AG04449 (cell line): ENCODE measurements at regions of chr5 and their contacts with region 1.

Region 1: GRCh38 chr5:147453875-147454814 is 55.7 kb downstream of the DPYSL3 start:
- DNase-seq: no peak
- H3K4me3 ChIP-seq: peak overlapping the region; percentile 81
- CTCF ChIP-seq: peak; percentile 86

Region 2: GRCh38 chr5:147303976-147304375 is 150.2 kb before region 1 on chr5:
- CTCF ChIA-PET with region 1: no interaction called
- POLR2A ChIA-PET with region 1: no interaction called
- DNase-seq: peak; percentile 26
- H3K4me3 ChIP-seq: no peak overlapping the region
- CTCF ChIP-seq: no peak

Region 3: DNA sequence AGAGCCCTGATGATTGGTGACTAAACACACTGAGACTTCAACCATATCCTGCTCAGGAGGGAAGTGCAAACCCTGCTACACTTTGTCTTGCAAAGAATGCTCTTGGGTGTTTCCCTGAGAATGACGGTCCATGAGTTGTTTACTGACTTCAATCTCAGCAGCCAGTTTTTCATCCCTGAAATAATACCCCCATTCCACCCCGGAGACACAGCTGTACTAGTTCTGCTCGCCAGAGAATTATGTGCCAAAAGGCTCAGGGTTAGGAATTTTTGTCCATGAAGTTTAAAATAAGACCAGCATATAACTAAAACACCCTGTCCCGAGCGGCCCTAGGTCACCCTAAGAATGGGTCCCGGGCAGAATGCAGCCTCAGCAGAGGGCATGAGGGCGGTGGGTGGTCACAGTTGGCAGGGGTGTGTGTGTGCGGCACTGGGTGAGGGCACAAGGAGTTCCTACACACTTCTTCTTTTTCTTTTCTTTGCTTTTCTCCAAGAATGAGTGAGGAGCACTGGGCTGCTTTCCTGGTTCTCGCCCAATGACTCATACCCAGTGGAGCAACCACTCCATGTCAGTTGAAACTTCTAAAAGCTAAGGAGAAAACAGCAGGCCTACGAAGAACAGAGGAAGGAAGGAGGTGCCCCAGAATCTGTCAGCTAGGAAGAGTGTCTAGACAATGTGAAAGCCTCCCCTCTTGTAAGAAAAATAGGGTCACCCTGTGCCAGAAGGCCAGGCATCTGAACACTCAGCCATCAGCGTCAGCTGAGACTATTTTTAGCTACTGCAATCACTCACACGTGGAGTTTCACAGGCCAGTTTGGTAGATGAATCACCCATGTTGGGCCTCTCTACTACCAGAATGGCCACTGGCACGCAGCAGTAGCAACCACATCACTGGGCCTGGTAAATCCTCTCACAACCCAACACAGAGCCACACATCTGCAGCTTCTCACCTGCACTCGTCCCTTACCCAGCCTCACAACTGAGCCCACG is 50.2 kb before region 1 on chr5:
- CTCF ChIA-PET with region 1: interaction called, 10 read pairs
- POLR2A ChIA-PET with region 1: no interaction called
- DNase-seq: peak; percentile 97
- H3K4me3 ChIP-seq: no peak overlapping the region
- CTCF ChIP-seq: no peak

Region 4: GRCh38 chr5:147439254-147439653 is 14.9 kb before region 1 on chr5:
- CTCF ChIA-PET with region 1: interaction called, 18 read pairs
- POLR2A ChIA-PET with region 1: no interaction called
- DNase-seq: no peak
- H3K4me3 ChIP-seq: no peak overlapping the region
- CTCF ChIP-seq: no peak

Region 5: GRCh38 chr5:147464211-147464610 is 10.1 kb after region 1 on chr5:
- CTCF ChIA-PET with region 1: interaction called, 27 read pairs
- POLR2A ChIA-PET with region 1: no interaction called
- DNase-seq: no peak
- H3K4me3 ChIP-seq: no peak overlapping the region
- CTCF ChIP-seq: peak; percentile 37

Region 6: GRCh38 chr5:147474140-147474539 is 20.0 kb after region 1 on chr5:
- CTCF ChIA-PET with region 1: interaction called, 24 read pairs
- POLR2A ChIA-PET with region 1: interaction called, 5 read pairs
- DNase-seq: no peak
- H3K4me3 ChIP-seq: no peak overlapping the region
- CTCF ChIP-seq: no peak

Region 7: DNA sequence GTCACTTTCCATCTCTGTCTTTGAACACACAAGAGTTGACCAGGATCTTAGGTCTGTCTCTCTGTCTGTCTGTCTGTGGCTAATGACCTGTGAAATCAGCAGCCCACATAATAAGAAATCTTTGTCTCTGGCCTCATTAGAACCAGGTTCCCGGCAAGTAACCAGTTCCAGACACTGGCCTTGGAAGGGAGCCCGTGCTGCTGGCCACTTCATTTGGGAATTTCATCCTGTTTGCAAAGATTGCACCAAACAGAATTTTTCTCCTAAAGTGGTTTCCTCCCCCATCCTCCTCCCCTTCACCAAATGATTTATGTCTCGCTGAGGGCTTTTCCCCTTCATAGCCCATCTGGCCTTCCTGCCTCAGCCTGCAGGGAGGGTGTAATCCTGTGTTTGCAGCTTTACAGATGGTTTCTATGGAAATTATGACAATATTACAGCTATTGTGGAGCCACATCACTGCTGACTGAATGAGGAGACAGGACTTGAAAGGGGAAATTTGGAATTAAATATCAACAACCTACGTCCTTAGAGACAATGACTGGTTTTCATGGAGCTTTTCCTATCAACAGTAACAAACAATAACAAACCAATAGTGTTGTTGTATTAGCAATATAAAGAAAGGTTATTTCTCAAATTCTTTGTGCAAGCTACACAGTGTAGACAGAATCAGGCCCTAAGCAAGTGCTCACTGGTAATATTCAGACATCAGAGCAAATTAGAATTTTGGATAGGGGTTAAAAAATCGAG is 30.0 kb after region 1 on chr5:
- CTCF ChIA-PET with region 1: interaction called, 11 read pairs
- POLR2A ChIA-PET with region 1: interaction called, 3 read pairs
- DNase-seq: peak; percentile 92
- H3K4me3 ChIP-seq: no peak overlapping the region
- CTCF ChIP-seq: no peak

Region 8: GRCh38 chr5:147835386-147835798 is 381.2 kb after region 1 on chr5:
- CTCF ChIA-PET with region 1: no interaction called
- POLR2A ChIA-PET with region 1: no interaction called
- DNase-seq: no peak
- H3K4me3 ChIP-seq: no peak overlapping the region
- CTCF ChIP-seq: no peak